ENCODE measurements at regions of chr2 and their contacts with region 1.

Region 1: GRCh38 chr2:71100195-71100964 is 29.6 kb downstream of the MCEE start:
- DNase-seq: peak; percentile 75
- H3K4me3 Mint-ChIP-seq: no peak overlapping the region
- H3K27ac Mint-ChIP-seq: no peak overlapping the region
- H3K4me1 Mint-ChIP-seq: peaks cover 11% of the 10 kb centered on the region
- H3K27me3 Mint-ChIP-seq: no peaks in the 10 kb centered on the region
- CTCF ChIP-seq: peak; percentile 50

Region 2: GRCh38 chr2:70919672-70920366 is 180.6 kb before region 1 on chr2:
- CTCF ChIA-PET with region 1: no interaction called
- POLR2A ChIA-PET with region 1: no interaction called
- intact Hi-C with region 1: no loop called
- DNase-seq: peak; percentile 78
- H3K4me3 Mint-ChIP-seq: no peak overlapping the region
- H3K27ac Mint-ChIP-seq: no peak overlapping the region
- H3K4me1 Mint-ChIP-seq: no peaks in the 10 kb centered on the region
- H3K27me3 Mint-ChIP-seq: peaks cover 26% of the 10 kb centered on the region
- CTCF ChIP-seq: peak; percentile 58

Region 3: GRCh38 chr2:71068218-71069035 is 32.0 kb before region 1 on chr2 and contains the start of gene NAGK:
- CTCF ChIA-PET with region 1: interaction called, 11 read pairs
- POLR2A ChIA-PET with region 1: interaction called, 31 read pairs
- intact Hi-C with region 1: no loop called
- DNase-seq: peak; percentile 95
- H3K4me3 Mint-ChIP-seq: peak within 1 kb of the TSS; percentile 96
- H3K27ac Mint-ChIP-seq: peak within 1 kb of the TSS; percentile 93
- H3K4me1 Mint-ChIP-seq: peaks cover 22% of the 10 kb centered on the region
- H3K27me3 Mint-ChIP-seq: no peaks in the 10 kb centered on the region
- CTCF ChIP-seq: no peak
- total RNA-seq, gene NAGK: 30.9 and 45.7 TPM in 2 replicates

Region 4: DNA sequence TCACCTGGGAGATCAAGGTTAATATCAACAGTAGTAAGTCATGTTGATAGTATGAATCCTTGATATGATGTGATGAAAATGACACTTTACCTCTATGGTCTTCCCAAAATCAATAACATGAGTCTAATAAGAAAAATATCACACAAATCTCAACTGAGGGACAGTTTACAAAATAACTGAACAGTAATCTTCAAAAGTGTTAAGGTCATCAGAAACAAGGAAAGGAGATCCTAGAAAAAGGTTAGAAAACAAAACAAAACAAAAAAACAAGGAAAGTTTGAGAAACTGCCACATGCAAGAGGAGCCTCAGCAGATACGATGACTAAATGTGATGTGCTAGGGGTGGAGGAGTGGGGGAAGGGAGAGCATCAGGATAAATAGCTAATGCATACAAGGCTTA is 13.5 kb after region 1 on chr2:
- CTCF ChIA-PET with region 1: interaction called, 30 read pairs
- POLR2A ChIA-PET with region 1: interaction called, 3 read pairs
- intact Hi-C with region 1: no loop called
- DNase-seq: no peak
- H3K4me3 Mint-ChIP-seq: no peak overlapping the region
- H3K27ac Mint-ChIP-seq: no peak overlapping the region
- H3K4me1 Mint-ChIP-seq: no peaks in the 10 kb centered on the region
- H3K27me3 Mint-ChIP-seq: no peaks in the 10 kb centered on the region
- CTCF ChIP-seq: no peak

Region 5: GRCh38 chr2:71190656-71191569 is 90.5 kb after region 1 on chr2:
- CTCF ChIA-PET with region 1: interaction called, 6 read pairs
- POLR2A ChIA-PET with region 1: no interaction called
- intact Hi-C with region 1: loop called (anchors 1 kb)
- DNase-seq: peak; percentile 43
- H3K4me3 Mint-ChIP-seq: no peak overlapping the region
- H3K27ac Mint-ChIP-seq: no peak overlapping the region
- H3K4me1 Mint-ChIP-seq: no peaks in the 10 kb centered on the region
- H3K27me3 Mint-ChIP-seq: no peaks in the 10 kb centered on the region
- CTCF ChIP-seq: peak; percentile 41

Measured in MCF 10A (cell line).